Caco-2 (cell line): ENCODE measurements at regions of chr1 and their contacts with region 1.

Region 1: GRCh38 chr1:217333939-217334338 is 297.0 kb downstream of the GPATCH2 start:
- DNase-seq: peak; percentile 36 to 43
- H3K4me3 ChIP-seq: no peak overlapping the region
- H3K4me3 Mint-ChIP-seq: no peak overlapping the region
- H3K27ac Mint-ChIP-seq: no peak overlapping the region
- H3K4me1 ChIP-seq: no peaks in the 10 kb centered on the region
- H3K4me1 Mint-ChIP-seq: peaks cover under 1% of the 10 kb centered on the region
- H3K27me3 ChIP-seq: 0 out of 2 replicates have a peak, but pooled peaks cover 1% of the 10 kb centered on the region
- H3K27me3 Mint-ChIP-seq: no peaks in the 10 kb centered on the region
- CTCF ChIP-seq: peak; percentile 42 to 62

Region 2: GRCh38 chr1:216793303-216793702 is 540.6 kb before region 1 on chr1:
- CTCF ChIA-PET with region 1: no interaction called
- POLR2A ChIA-PET with region 1: no interaction called
- intact Hi-C with region 1: loop called (anchors 2 kb)
- DNase-seq: peak; percentile 14 to 41
- H3K4me3 ChIP-seq: no peak overlapping the region
- H3K4me3 Mint-ChIP-seq: no peak overlapping the region
- H3K27ac Mint-ChIP-seq: no peak overlapping the region
- H3K4me1 ChIP-seq: no peaks in the 10 kb centered on the region
- H3K4me1 Mint-ChIP-seq: no peaks in the 10 kb centered on the region
- H3K27me3 ChIP-seq: no peaks in the 10 kb centered on the region
- H3K27me3 Mint-ChIP-seq: no peaks in the 10 kb centered on the region
- CTCF ChIP-seq: peak in 1 of 2 experiments; percentile 12

Region 3: DNA sequence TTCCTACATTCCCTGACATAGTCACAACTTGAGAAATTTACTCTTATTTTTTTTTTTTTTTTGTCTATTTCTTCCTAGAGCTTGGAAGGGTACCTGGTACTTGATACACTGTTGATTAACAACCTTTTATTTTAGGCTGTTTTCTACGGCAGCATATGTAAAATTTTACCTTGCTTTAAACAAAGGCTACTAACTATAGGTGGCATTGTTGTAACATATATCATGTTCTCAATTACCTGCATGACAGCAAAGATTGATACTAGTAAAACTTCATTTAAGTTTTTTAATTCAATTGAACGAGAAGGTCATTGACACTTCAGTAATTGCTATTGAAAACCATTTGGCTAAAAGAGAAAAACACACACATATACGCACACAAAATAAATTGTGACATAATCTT is 372.4 kb before region 1 on chr1:
- CTCF ChIA-PET with region 1: no interaction called
- POLR2A ChIA-PET with region 1: no interaction called
- intact Hi-C with region 1: loop called (anchors 10 kb)
- DNase-seq: no peak
- H3K4me3 ChIP-seq: no peak overlapping the region
- H3K4me3 Mint-ChIP-seq: no peak overlapping the region
- H3K27ac Mint-ChIP-seq: no peak overlapping the region
- H3K4me1 ChIP-seq: 0 out of 2 replicates have a peak, but pooled peaks cover 5% of the 10 kb centered on the region
- H3K4me1 Mint-ChIP-seq: no peaks in the 10 kb centered on the region
- H3K27me3 ChIP-seq: no peaks in the 10 kb centered on the region; the same call in 1 of the 2 replicates
- H3K27me3 Mint-ChIP-seq: peaks cover 11% of the 10 kb centered on the region
- CTCF ChIP-seq: no peak

Region 4: DNA sequence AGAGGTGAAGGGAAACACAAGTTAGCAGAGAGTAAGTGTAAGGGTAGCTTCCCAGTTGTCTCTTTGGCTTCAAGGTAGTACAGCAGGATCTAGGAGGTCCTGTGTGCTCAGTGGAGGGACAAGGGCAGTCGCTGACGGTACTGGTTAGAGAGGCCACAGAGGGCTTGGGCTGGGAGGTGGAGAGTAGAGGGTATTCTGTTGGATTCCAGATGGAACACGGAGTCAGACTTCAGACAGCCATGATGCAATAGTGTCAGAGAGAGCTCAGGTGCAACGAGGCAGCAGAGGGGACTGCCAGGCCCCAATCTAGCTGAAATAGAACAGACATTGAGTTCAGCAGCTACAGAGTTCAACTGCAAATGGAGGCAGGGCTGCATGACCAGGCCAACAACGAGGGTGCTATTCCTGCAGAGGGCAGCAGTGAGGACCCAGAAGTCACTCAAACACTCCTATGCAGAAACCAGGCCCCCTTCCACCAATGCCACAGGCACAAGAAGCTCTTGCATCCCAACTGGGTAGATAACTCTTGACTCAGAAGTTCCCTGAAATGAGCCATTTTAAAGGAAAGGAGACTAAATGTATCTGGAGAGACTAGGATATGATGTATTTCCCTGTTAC is 285.7 kb before region 1 on chr1:
- CTCF ChIA-PET with region 1: no interaction called
- POLR2A ChIA-PET with region 1: no interaction called
- intact Hi-C with region 1: loop called (anchors 5 kb)
- DNase-seq: peak; percentile 30 to 33
- H3K4me3 ChIP-seq: no peak overlapping the region
- H3K4me3 Mint-ChIP-seq: no peak overlapping the region
- H3K27ac Mint-ChIP-seq: no peak overlapping the region
- H3K4me1 ChIP-seq: no peaks in the 10 kb centered on the region
- H3K4me1 Mint-ChIP-seq: no peaks in the 10 kb centered on the region
- H3K27me3 ChIP-seq: no peaks in the 10 kb centered on the region
- H3K27me3 Mint-ChIP-seq: no peaks in the 10 kb centered on the region
- CTCF ChIP-seq: peak in 1 of 2 experiments; percentile 20

Region 5: GRCh38 chr1:217425422-217425821 is 91.5 kb after region 1 on chr1:
- CTCF ChIA-PET with region 1: no interaction called
- POLR2A ChIA-PET with region 1: no interaction called
- intact Hi-C with region 1: no loop called
- DNase-seq: no peak
- H3K4me3 ChIP-seq: no peak overlapping the region
- H3K4me3 Mint-ChIP-seq: no peak overlapping the region
- H3K27ac Mint-ChIP-seq: no peak overlapping the region
- H3K4me1 ChIP-seq: no peaks in the 10 kb centered on the region
- H3K4me1 Mint-ChIP-seq: peaks cover 4% of the 10 kb centered on the region
- H3K27me3 ChIP-seq: no peaks in the 10 kb centered on the region
- H3K27me3 Mint-ChIP-seq: no peaks in the 10 kb centered on the region
- CTCF ChIP-seq: no peak